Activated CD4-positive, alpha-beta T cell treated with anti-CD3 and anti-CD28 coated beads for 36 hours (primary cell): ENCODE measurements at regions of chrX and their contacts with region 1.

Region 1: GRCh38 chrX:52261463-52262194 is 76.9 kb downstream of the MAGED4 start:
- DNase-seq: peak; percentile 91
- ATAC-seq: peak; percentile 99
- H3K4me3 Mint-ChIP-seq: peak overlapping the region; percentile 84
- H3K27ac Mint-ChIP-seq: peak overlapping the region; percentile 96
- H3K4me1 Mint-ChIP-seq: peaks cover 11% of the 10 kb centered on the region
- H3K27me3 Mint-ChIP-seq: peaks cover 4% of the 10 kb centered on the region

Region 2: DNA sequence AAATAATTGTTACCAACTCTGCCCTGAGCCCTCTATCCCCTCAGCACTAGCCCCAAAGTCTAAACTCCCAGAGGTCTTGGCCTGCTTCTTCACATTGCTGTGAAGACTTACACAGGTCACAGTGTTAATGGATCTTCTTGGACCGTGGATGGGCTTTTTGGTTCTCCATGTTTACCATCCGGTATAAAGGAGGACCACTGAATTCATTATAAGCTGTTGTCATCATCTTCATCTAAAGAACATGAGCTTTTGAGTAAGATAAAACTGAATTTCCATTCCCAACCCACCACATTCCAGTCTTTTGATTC is 773.7 kb before region 1 on chrX:
- CTCF ChIA-PET with region 1: no interaction called
- POLR2A ChIA-PET with region 1: no interaction called
- intact Hi-C with region 1: loop called (anchors 5 kb)
- DNase-seq: no peak
- ATAC-seq: no peak
- H3K4me3 Mint-ChIP-seq: no peak overlapping the region
- H3K27ac Mint-ChIP-seq: no peak overlapping the region
- H3K4me1 Mint-ChIP-seq: no peaks in the 10 kb centered on the region
- H3K27me3 Mint-ChIP-seq: peaks cover 2% of the 10 kb centered on the region

Region 3: GRCh38 chrX:51614353-51615012 is 647.1 kb before region 1 on chrX:
- CTCF ChIA-PET with region 1: interaction called, 3 read pairs
- POLR2A ChIA-PET with region 1: no interaction called
- intact Hi-C with region 1: loop called (anchors 1 to 10 kb)
- DNase-seq: no peak
- ATAC-seq: no peak
- H3K4me3 Mint-ChIP-seq: no peak overlapping the region
- H3K27ac Mint-ChIP-seq: no peak overlapping the region
- H3K4me1 Mint-ChIP-seq: peaks cover 3% of the 10 kb centered on the region
- H3K27me3 Mint-ChIP-seq: peaks cover 32% of the 10 kb centered on the region

Region 4: GRCh38 chrX:51641421-51642021 is 620.1 kb before region 1 on chrX:
- CTCF ChIA-PET with region 1: interaction called, 6 read pairs
- POLR2A ChIA-PET with region 1: no interaction called
- intact Hi-C with region 1: loop called (anchors 2 to 5 kb)
- DNase-seq: peak; percentile 10
- ATAC-seq: no peak
- H3K4me3 Mint-ChIP-seq: no peak overlapping the region
- H3K27ac Mint-ChIP-seq: no peak overlapping the region
- H3K4me1 Mint-ChIP-seq: no peaks in the 10 kb centered on the region
- H3K27me3 Mint-ChIP-seq: peaks cover 22% of the 10 kb centered on the region

Region 5: GRCh38 chrX:51743179-51743957 is 518.3 kb before region 1 on chrX and contains the start of gene GSPT2:
- CTCF ChIA-PET with region 1: no interaction called
- POLR2A ChIA-PET with region 1: no interaction called
- intact Hi-C with region 1: loop called in 1 of 2 experiments (anchors 1 kb)
- DNase-seq: peak; percentile 83
- ATAC-seq: peak; percentile 97
- H3K4me3 Mint-ChIP-seq: peak within 1 kb of the TSS; percentile 85
- H3K27ac Mint-ChIP-seq: peak within 1 kb of the TSS; percentile 86
- H3K4me1 Mint-ChIP-seq: peaks cover 22% of the 10 kb centered on the region
- H3K27me3 Mint-ChIP-seq: no peaks in the 10 kb centered on the region
- total RNA-seq, gene GSPT2: 11.2 to 11.6 TPM

Region 6: GRCh38 chrX:51804741-51805140 is 456.9 kb before region 1 on chrX:
- CTCF ChIA-PET with region 1: no interaction called
- POLR2A ChIA-PET with region 1: no interaction called
- intact Hi-C with region 1: no loop called
- DNase-seq: no peak
- ATAC-seq: no peak
- H3K4me3 Mint-ChIP-seq: no peak overlapping the region
- H3K27ac Mint-ChIP-seq: no peak overlapping the region
- H3K4me1 Mint-ChIP-seq: peaks cover 24% of the 10 kb centered on the region
- H3K27me3 Mint-ChIP-seq: no peaks in the 10 kb centered on the region